ENCODE measurements at regions of chr15 and their contacts with region 1.

Region 1: GRCh38 chr15:29289173-29289572 is 19.6 kb upstream of the NSMCE3 start:
- DNase-seq: no peak
- ATAC-seq: no peak
- H3K4me3 ChIP-seq: no peak overlapping the region
- H3K27ac ChIP-seq: no peak overlapping the region
- H3K4me1 ChIP-seq: no peaks in the 10 kb centered on the region
- H3K27me3 ChIP-seq: peaks cover 0 to 20% (median 0%) of the 10 kb centered on the region in 7 donors
- CTCF ChIP-seq: no peak

Region 2: GRCh38 chr15:29124581-29125381 is 164.4 kb before region 1 on chr15:
- intact Hi-C with region 1: no loop called
- DNase-seq: no peak
- ATAC-seq: no peak
- H3K4me3 ChIP-seq: no peak overlapping the region
- H3K27ac ChIP-seq: no peak overlapping the region
- H3K4me1 ChIP-seq: no peaks in the 10 kb centered on the region
- H3K27me3 ChIP-seq: peaks cover 0 to 33% (median 18%) of the 10 kb centered on the region in 7 donors
- CTCF ChIP-seq: no peak

Region 3: GRCh38 chr15:29233566-29233965 is 55.6 kb before region 1 on chr15:
- intact Hi-C with region 1: loop called in 1 of 10 experiments (anchors 10 kb)
- DNase-seq: no peak
- ATAC-seq: no peak
- H3K4me3 ChIP-seq: no peak overlapping the region
- H3K27ac ChIP-seq: no peak overlapping the region
- H3K4me1 ChIP-seq: no peaks in the 10 kb centered on the region
- H3K27me3 ChIP-seq: peaks cover 0 to 11% (median 5%) of the 10 kb centered on the region in 7 donors
- CTCF ChIP-seq: no peak

Region 4: GRCh38 chr15:29252234-29252633 is 36.9 kb before region 1 on chr15:
- intact Hi-C with region 1: no loop called
- DNase-seq: no peak
- ATAC-seq: no peak
- H3K4me3 ChIP-seq: no peak overlapping the region
- H3K27ac ChIP-seq: no peak overlapping the region
- H3K4me1 ChIP-seq: no peaks in the 10 kb centered on the region
- H3K27me3 ChIP-seq: no peaks in the 10 kb centered on the region
- CTCF ChIP-seq: no peak

Region 5: DNA sequence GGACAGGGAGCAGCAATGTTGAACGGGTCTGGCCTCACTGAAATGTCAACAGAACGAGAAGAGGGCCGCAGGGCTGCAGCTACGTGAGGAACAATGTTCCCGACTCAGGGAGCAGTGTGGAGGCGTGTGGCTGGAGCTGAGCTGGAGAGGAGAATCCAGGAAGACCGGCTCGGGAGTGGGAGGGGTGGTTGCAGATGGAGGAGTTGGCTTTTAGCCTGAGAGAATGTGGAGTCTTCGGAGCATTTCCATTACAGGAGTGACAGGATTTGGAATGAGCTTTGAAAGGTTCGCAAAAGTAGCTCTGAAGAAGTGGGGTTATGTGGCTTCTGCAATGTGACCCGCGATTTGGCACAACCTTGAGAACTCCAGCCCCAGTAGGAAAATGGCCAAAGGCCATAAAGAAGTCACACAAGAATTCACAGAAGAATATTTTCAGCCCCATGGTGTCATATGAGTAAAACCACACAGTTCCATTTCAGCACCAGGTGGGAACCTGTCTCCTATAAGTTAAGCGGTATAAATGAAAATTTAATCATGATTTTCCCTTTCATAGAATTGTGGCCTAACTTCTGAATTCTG is 59.3 kb after region 1 on chr15:
- intact Hi-C with region 1: loop called in 1 of 10 experiments (anchors 10 kb)
- DNase-seq: no peak
- ATAC-seq: peak in 1 of 8 donors; percentile 45
- H3K4me3 ChIP-seq: no peak overlapping the region
- H3K27ac ChIP-seq: no peak overlapping the region
- H3K4me1 ChIP-seq: no peaks in the 10 kb centered on the region
- H3K27me3 ChIP-seq: peaks cover 0 to 18% (median 6%) of the 10 kb centered on the region in 7 donors
- CTCF ChIP-seq: no peak